AG04449 (cell line): ENCODE measurements at regions of chr16 and their contacts with region 1.

Region 1: DNA sequence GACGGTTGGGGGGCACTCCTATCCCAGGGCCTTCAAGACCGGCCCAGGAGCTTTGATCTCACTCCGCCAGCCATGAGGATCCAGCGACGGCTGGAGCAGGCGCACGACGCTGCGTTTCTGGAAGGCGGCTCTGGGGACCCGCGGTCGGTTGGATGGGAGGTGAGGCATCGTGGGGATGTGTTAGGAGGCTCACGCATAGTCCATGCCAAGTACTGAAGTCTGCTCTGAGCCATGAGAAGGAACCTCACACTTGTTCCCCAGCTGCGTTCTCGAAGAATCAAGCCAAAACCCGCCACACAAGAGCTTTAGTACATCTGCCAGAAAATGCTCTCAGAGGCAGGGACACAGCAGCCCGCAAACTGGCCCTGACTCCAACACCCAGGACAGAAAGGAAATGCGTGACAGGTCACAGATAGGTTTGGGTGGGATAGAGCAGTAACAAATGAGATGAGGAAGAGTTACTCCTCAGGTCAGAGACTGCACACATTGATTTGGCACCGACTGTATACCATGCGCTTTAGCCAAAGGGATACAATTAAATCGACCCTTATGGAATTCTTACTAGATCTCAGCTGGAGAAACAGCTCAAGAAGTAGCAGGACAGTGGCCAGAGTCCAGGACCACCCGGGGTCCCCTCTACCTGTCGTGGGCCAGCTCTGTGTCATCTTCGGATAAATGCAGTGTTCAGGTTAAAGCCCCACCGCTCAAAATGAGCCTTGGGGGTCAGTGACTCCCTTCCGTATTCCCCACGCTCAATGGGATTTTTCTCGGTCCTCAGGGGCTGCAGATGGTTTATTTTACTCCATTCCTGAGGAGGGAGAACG is 6.7 kb upstream of the GSG1L start:
- DNase-seq: no peak
- H3K4me3 ChIP-seq: no peak overlapping the region
- CTCF ChIP-seq: no peak

Region 2: DNA sequence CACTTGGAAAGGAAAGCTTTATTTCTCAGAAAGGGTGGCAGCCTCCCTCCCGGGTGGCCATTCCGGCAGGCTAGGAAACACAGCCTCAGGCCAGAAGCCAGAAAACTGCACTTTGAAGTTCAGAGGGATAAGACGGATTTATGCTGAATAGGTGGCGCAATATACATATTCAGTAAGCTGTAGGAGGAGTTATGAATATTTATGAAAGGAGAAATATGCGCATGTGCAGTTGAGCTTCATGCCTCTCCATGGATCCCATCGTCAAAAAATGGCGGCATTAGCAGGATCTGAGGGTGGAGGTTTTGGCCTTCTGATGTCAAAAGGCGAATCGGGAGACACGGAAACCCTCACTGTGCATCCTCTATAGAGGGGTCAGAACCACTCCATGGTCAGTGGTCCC is 438.0 kb before region 1 on chr16:
- CTCF ChIA-PET with region 1: interaction called, 75 read pairs
- POLR2A ChIA-PET with region 1: no interaction called
- DNase-seq: no peak
- H3K4me3 ChIP-seq: no peak overlapping the region
- CTCF ChIP-seq: no peak

Region 3: DNA sequence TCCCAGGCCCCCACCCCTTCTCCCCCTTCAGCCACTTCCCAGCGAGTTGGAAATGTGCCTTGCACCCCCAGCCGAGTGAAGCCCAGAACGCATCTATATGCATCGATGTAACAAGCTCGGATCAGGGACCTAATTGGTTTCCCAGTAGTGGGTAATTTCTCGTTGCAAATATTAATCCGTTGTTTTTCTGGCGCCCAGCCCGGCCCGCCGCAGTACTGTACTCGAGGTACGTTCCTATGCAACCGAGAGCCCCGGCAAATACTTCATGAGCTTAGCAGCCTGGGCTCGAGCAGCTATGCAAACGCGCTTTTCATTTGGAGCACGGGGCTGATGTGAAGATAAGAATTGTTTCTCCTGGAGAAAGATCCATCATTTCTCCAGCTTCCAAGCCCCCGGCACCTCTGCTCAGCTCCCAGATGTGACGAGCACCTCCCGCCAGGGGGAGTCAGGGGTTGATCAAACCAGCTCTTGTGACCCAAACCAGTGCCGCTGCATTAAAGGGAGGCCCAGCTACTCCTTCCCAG is 290.5 kb before region 1 on chr16:
- CTCF ChIA-PET with region 1: interaction called, 39 read pairs
- POLR2A ChIA-PET with region 1: no interaction called
- DNase-seq: no peak
- H3K4me3 ChIP-seq: no peak overlapping the region
- CTCF ChIP-seq: peak; percentile 65

Region 4: GRCh38 chr16:28081391-28081968 is 11.3 kb after region 1 on chr16:
- CTCF ChIA-PET with region 1: interaction called, 33 read pairs
- POLR2A ChIA-PET with region 1: no interaction called
- DNase-seq: no peak
- H3K4me3 ChIP-seq: no peak overlapping the region
- CTCF ChIP-seq: no peak

Region 5: GRCh38 chr16:28218104-28218503 is 147.9 kb after region 1 on chr16:
- CTCF ChIA-PET with region 1: interaction called, 20 read pairs
- POLR2A ChIA-PET with region 1: no interaction called
- DNase-seq: no peak
- H3K4me3 ChIP-seq: no peak overlapping the region
- CTCF ChIP-seq: peak; percentile 75